ENCODE measurements at regions of chr2 and their contacts with region 1.

Region 1: GRCh38 chr2:112884869-112885505 is 26.0 kb upstream of the IL37 start:
- DNase-seq: peak; percentile 32
- H3K4me3 ChIP-seq: no peak overlapping the region
- H3K27ac ChIP-seq: no peak overlapping the region
- H3K4me1 ChIP-seq: no peaks in the 10 kb centered on the region
- H3K27me3 ChIP-seq: no peaks in the 10 kb centered on the region
- CTCF ChIP-seq: peak; percentile 79

Region 2: DNA sequence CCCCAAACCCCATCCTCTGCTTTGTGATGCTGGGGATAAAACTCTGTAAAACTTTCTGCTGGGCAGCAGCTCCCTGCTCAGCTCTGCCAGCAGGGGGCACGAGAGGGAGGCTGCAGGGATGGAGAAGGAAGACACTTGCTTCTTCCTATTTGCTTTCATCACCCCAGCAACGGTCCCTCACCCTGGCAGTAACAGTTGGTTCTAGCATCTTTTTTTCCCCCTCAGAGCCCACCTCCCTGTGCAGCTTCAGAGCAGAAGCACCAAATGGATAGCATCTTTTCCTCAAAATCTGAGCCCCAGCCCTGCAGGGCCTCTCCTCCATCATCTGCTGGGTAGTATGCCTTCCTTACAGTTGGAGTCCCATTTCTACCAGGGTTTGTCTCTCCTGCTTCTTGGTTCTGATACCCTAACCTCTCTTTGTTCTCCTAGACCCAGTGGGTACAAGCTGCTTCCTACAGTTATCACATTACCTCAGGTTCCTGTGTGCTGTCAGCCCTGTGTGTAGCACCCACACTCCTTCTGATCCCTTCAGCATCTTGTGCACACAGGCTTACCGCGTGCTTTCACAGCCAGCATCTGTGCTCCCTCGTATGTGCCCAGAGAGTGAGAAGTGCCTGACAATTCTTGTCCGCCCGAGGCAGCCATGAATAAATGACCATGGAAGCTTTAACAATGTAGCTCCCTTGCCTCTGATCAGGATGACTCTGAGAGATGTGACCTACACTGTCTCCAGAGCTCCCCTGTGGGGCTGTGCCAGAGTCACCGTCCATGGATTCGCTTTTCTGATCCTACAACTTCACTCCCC is 135.0 kb before region 1 on chr2:
- intact Hi-C with region 1: loop called (anchors 10 kb)
- DNase-seq: peak; percentile 55
- H3K4me3 ChIP-seq: no peak overlapping the region
- H3K27ac ChIP-seq: no peak overlapping the region
- H3K4me1 ChIP-seq: no peaks in the 10 kb centered on the region
- H3K27me3 ChIP-seq: peaks cover 9% of the 10 kb centered on the region
- CTCF ChIP-seq: peak; percentile 91

Region 3: GRCh38 chr2:112928856-112929255 is 43.9 kb after region 1 on chr2:
- intact Hi-C with region 1: no loop called
- DNase-seq: no peak
- H3K4me3 ChIP-seq: no peak overlapping the region
- H3K27ac ChIP-seq: no peak overlapping the region
- H3K4me1 ChIP-seq: no peaks in the 10 kb centered on the region
- H3K27me3 ChIP-seq: peaks cover 44% of the 10 kb centered on the region
- CTCF ChIP-seq: no peak

Region 4: DNA sequence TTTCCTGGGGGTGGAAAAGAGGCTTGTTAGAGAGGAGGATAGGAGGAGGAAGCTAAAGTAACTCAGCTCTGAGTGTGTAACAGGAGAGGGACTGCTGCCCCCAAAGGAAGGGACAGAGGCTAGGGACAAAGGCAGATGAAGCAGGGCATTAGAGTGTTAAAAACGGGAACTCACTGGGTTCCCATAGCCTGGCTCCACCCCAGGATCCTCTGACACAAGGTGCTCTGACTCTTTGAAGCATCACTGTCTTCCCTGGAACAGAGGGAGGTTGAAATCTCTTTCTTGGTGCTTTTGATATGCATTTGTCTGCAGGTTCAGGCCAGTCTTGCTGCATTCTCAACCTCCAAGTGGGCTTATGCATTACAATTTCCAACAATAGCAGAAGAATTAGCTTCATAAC is 143.1 kb after region 1 on chr2:
- intact Hi-C with region 1: no loop called
- DNase-seq: no peak
- H3K4me3 ChIP-seq: no peak overlapping the region
- H3K27ac ChIP-seq: no peak overlapping the region
- H3K4me1 ChIP-seq: no peaks in the 10 kb centered on the region
- H3K27me3 ChIP-seq: peaks cover 61% of the 10 kb centered on the region
- CTCF ChIP-seq: no peak

Region 5: GRCh38 chr2:113977660-113978523 is 1092.9 kb after region 1 on chr2:
- intact Hi-C with region 1: no loop called
- DNase-seq: no peak
- H3K4me3 ChIP-seq: no peak overlapping the region
- H3K27ac ChIP-seq: no peak overlapping the region
- H3K4me1 ChIP-seq: no peaks in the 10 kb centered on the region
- H3K27me3 ChIP-seq: no peaks in the 10 kb centered on the region
- CTCF ChIP-seq: peak; percentile 47

Measured in left ventricle myocardium inferior (tissue), 1 donor.